A549 (cell line): ENCODE measurements at regions of chr17 and their contacts with region 1.

Region 1: GRCh38 chr17:18203308-18203707 is 19.7 kb downstream of the ALKBH5 start:
- DNase-seq: no peak
- ATAC-seq: peak in 1 of 2 experiments; percentile 50; a peak in 2 of 6 replicates
- H3K4me3 ChIP-seq: no peak overlapping the region
- H3K27ac ChIP-seq: 0 out of 6 replicates have a peak overlapping the region, but pooled peaks of 1 of the 2 experiments have one; percentile 6
- H3K4me1 ChIP-seq: peaks cover 14% of the 10 kb centered on the region
- CTCF ChIP-seq: no peak
- EP300 ChIP-seq: no peak
- POLR2A ChIP-seq: no peak
- RAD21 ChIP-seq: no peak

Region 2: GRCh38 chr17:17994271-17995069 is 208.8 kb before region 1 on chr17:
- CTCF ChIA-PET with region 1: no interaction called
- POLR2A ChIA-PET with region 1: no interaction called
- DNase-seq: peak; percentile 62 to 74
- ATAC-seq: peak; percentile 73 to 82
- H3K4me3 ChIP-seq: no peak overlapping the region
- H3K27ac ChIP-seq: peak overlapping the region in 1 of 2 experiments; percentile 84; a peak in 2 of 6 replicates
- H3K4me1 ChIP-seq: peaks cover 38% of the 10 kb centered on the region
- CTCF ChIP-seq: peak; percentile 52
- EP300 ChIP-seq: no peak
- POLR2A ChIP-seq: no peak
- RAD21 ChIP-seq: peak; percentile 38 to 48; a peak in 3 of 5 replicates

Region 3: GRCh38 chr17:18191967-18192366 is 11.3 kb before region 1 on chr17:
- CTCF ChIA-PET with region 1: interaction called, 32 read pairs
- POLR2A ChIA-PET with region 1: interaction called, 9 read pairs
- DNase-seq: peak in 1 of 2 experiments; percentile 81
- ATAC-seq: peak; percentile 82 to 88; a peak in 5 of 6 replicates
- H3K4me3 ChIP-seq: no peak overlapping the region
- H3K27ac ChIP-seq: no peak overlapping the region
- H3K4me1 ChIP-seq: peaks cover 42% of the 10 kb centered on the region
- CTCF ChIP-seq: peak; percentile 21; the same call in 2 of the 3 replicates
- EP300 ChIP-seq: no peak
- POLR2A ChIP-seq: no peak
- RAD21 ChIP-seq: peak in 1 of 2 experiments; percentile 15; a peak in 1 of 5 replicates

Region 4: GRCh38 chr17:18231164-18231563 is 27.9 kb after region 1 on chr17:
- CTCF ChIA-PET with region 1: no interaction called
- POLR2A ChIA-PET with region 1: no interaction called
- DNase-seq: no peak
- ATAC-seq: no peak
- H3K4me3 ChIP-seq: no peak overlapping the region
- H3K27ac ChIP-seq: no peak overlapping the region
- H3K4me1 ChIP-seq: peaks cover 12% of the 10 kb centered on the region; the same call in 2 of the 3 replicates
- CTCF ChIP-seq: no peak
- EP300 ChIP-seq: no peak
- POLR2A ChIP-seq: no peak
- RAD21 ChIP-seq: no peak